ENCODE measurements at regions of chr6 and their contacts with region 1.

Region 1: DNA sequence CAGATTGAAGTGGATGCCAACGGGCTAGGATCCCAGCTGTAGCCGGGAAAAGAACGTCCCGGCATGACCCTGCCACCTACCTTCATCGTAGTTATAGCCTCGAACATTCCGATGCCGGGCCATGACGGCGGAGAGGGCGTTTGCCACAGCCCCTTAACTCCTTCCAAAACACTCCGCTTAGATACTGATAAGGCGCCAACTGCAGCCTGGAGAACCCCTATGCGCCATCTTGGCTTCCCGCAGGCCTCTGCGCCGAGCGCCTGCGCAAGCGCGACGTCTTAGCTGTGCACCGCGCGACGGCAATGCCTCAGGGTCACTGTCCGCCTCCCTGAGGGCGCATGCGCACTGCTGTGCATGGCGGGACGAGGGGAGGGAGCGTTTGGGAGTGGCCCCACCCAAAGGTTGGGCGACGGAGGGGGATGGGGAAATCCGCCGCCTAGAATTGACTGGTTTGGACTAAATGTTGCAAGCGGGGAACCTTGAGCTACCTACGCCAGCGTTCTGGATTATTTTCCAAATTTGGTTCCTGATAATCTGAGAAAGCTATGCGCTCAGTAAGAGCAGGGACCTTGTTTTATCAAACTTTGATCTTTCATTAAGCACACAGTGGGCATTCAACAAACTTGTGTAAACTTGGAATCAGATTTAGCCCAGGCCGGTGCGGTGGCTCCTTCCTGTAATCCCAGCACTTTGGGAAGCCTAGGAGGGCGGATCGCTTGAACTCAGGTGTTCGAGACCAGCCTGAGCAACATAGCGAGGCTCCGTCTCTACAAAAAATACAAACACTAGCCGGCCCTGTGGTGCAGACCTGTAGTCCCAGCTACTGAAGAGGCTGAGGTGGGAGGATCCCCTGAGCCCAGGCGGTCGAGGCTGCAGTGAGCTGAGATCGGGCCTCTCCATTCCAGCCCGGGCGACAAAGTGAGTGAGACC is at the start of gene HBS1L:
- DNase-seq: peak; percentile 98
- ATAC-seq: peak; percentile 99
- H3K4me3 Mint-ChIP-seq: peak within 1 kb of the TSS; percentile 87
- H3K27ac Mint-ChIP-seq: peak within 1 kb of the TSS; percentile 90
- H3K4me1 Mint-ChIP-seq: peaks cover 31% of the 10 kb centered on the region
- H3K27me3 Mint-ChIP-seq: no peaks in the 10 kb centered on the region
- total RNA-seq, gene HBS1L: 72.6 to 72.7 TPM

Region 2: DNA sequence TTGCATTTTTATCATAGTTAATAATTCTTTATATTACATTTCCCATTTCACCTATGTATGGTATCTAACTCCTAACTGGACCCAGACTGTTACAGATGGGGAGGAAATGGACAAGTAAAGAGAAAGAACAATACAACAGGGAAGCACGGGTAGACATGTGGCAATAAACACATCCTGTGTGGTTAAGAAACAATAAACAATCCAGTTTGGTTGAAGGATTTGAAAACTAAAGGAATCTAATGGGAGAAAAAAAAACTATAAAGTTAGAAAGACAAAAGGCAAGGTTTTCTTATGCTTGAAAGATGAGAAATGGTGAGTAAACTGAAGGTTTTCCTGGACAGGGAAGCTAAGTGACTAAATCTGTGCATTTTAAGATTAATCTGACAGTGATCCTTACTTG is 70.0 kb before region 1 on chr6:
- POLR2A ChIA-PET with region 1: no interaction called
- DNase-seq: no peak
- ATAC-seq: no peak
- H3K4me3 Mint-ChIP-seq: no peak overlapping the region
- H3K27ac Mint-ChIP-seq: peak overlapping the region; percentile 15
- H3K4me1 Mint-ChIP-seq: peaks cover 22% of the 10 kb centered on the region
- H3K27me3 Mint-ChIP-seq: no peaks in the 10 kb centered on the region

Region 3: GRCh38 chr6:135088818-135089809 is 34.3 kb after region 1 on chr6:
- POLR2A ChIA-PET with region 1: interaction called, 62 read pairs
- DNase-seq: no peak
- ATAC-seq: peak; percentile 83
- H3K4me3 Mint-ChIP-seq: peak overlapping the region; percentile 79
- H3K27ac Mint-ChIP-seq: peak overlapping the region; percentile 95
- H3K4me1 Mint-ChIP-seq: peaks cover 68% of the 10 kb centered on the region
- H3K27me3 Mint-ChIP-seq: no peaks in the 10 kb centered on the region

Region 4: GRCh38 chr6:135104199-135104598 is 49.4 kb after region 1 on chr6:
- POLR2A ChIA-PET with region 1: interaction called, 10 read pairs
- DNase-seq: no peak
- ATAC-seq: no peak
- H3K4me3 Mint-ChIP-seq: no peak overlapping the region
- H3K27ac Mint-ChIP-seq: peak overlapping the region; percentile 14
- H3K4me1 Mint-ChIP-seq: peaks cover 17% of the 10 kb centered on the region
- H3K27me3 Mint-ChIP-seq: no peaks in the 10 kb centered on the region

Region 5: DNA sequence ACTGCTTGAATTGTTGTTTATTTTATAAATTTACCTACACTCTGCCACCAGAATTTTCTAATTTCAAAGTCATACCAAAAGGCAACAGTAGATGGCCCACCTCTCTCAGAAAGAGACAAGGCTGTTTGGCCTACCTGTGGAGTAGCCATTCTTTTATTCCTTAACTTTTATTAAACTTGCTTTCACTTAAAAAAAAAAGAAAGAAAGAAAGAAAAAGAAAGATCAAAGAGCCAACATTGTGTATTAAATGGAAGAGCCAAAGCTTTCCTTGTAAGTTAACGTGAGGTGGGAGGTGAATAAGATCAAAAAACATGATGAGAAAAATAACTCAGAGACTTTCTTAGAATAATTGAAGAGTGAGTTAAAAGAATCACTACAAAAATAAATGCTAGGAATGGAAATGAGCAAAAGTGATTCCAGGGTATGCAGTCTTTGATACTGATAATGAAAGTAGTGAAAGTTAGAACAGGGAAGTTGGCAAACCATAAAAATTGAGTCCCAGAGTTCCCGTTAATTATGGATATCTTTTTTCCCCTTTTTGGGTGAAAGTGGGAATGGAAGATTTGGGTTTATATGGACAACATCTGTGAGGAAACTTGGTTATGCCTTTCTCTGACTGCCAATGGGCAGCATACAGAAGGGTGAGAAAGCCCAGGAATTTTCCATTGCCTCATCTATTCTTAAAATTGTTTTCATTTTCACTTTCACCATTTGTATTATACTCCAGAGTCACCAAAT is 90.4 kb after region 1 on chr6:
- POLR2A ChIA-PET with region 1: interaction called, 10 read pairs
- DNase-seq: no peak
- ATAC-seq: peak; percentile 68
- H3K4me3 Mint-ChIP-seq: peak overlapping the region; percentile 75
- H3K27ac Mint-ChIP-seq: peak overlapping the region; percentile 89
- H3K4me1 Mint-ChIP-seq: peaks cover 48% of the 10 kb centered on the region
- H3K27me3 Mint-ChIP-seq: no peaks in the 10 kb centered on the region

Measured in activated naive CD8-positive, alpha-beta T cell treated with anti-CD3 and anti-CD28 coated beads, Interleukin-2, amount 10 ng/mL, durations not matched to agents 7 days and 5 days (primary cell).